Naive thymus-derived CD4-positive, alpha-beta T cell (primary cell): ENCODE measurements at regions of chr4 and their contacts with region 1.

Region 1: GRCh38 chr4:39469429-39470077 is 10.7 kb downstream of the LIAS start:
- DNase-seq: peak in 7 of 9 donors; percentile 36 to 60 (median 47)
- ATAC-seq: peak; percentile 98
- H3K4me3 ChIP-seq: no peak overlapping the region
- H3K4me3 Mint-ChIP-seq: no peak overlapping the region
- H3K27ac ChIP-seq: no peak overlapping the region
- H3K27ac Mint-ChIP-seq: peak overlapping the region in 6 of 9 donors; percentile 24 to 62 (median 44)
- H3K4me1 ChIP-seq: no peaks in the 10 kb centered on the region
- H3K4me1 Mint-ChIP-seq: peaks cover 0 to 15% (median 4%) of the 10 kb centered on the region in 7 donors
- H3K27me3 ChIP-seq: no peaks in the 10 kb centered on the region
- H3K27me3 Mint-ChIP-seq: no peaks in the 10 kb centered on the region

Region 2: GRCh38 chr4:39608451-39608850 is 138.9 kb after region 1 on chr4:
- CTCF ChIA-PET with region 1: no interaction called
- POLR2A ChIA-PET with region 1: no interaction called
- intact Hi-C with region 1: no loop called
- DNase-seq: no peak
- ATAC-seq: no peak
- H3K4me3 ChIP-seq: no peak overlapping the region
- H3K4me3 Mint-ChIP-seq: no peak overlapping the region
- H3K27ac ChIP-seq: no peak overlapping the region
- H3K27ac Mint-ChIP-seq: no peak overlapping the region
- H3K4me1 ChIP-seq: no peaks in the 10 kb centered on the region
- H3K4me1 Mint-ChIP-seq: peaks cover 0 to 3% (median 0%) of the 10 kb centered on the region in 7 donors
- H3K27me3 ChIP-seq: no peaks in the 10 kb centered on the region
- H3K27me3 Mint-ChIP-seq: no peaks in the 10 kb centered on the region

Region 3: DNA sequence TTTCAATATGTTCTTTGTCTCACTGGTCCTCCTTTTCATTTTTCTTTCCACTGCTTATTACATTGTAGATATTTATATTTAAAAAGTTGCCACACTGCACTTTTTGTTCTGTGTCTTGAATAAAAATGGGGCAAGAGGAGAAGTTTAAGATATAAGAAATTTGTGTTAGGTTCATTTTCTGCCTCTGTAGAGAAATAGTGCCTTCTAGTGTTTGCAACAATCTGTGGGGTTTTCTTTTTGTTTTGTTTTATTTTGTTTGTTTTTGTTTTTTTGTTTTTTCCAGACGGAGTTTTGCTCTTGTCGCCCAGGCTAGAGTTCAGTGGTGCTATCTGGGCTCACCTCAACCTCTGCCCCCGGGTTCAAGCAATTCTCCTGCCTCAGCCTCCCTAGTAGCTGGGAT is 189.2 kb after region 1 on chr4:
- CTCF ChIA-PET with region 1: interaction called, 8 read pairs
- POLR2A ChIA-PET with region 1: no interaction called
- intact Hi-C with region 1: loop called in 1 of 2 experiments (anchors 1 kb)
- DNase-seq: no peak
- ATAC-seq: no peak
- H3K4me3 ChIP-seq: no peak overlapping the region
- H3K4me3 Mint-ChIP-seq: no peak overlapping the region
- H3K27ac ChIP-seq: no peak overlapping the region
- H3K27ac Mint-ChIP-seq: no peak overlapping the region
- H3K4me1 ChIP-seq: no peaks in the 10 kb centered on the region
- H3K4me1 Mint-ChIP-seq: peaks cover 0 to 7% (median 0%) of the 10 kb centered on the region in 7 donors
- H3K27me3 ChIP-seq: no peaks in the 10 kb centered on the region
- H3K27me3 Mint-ChIP-seq: no peaks in the 10 kb centered on the region

Region 4: DNA sequence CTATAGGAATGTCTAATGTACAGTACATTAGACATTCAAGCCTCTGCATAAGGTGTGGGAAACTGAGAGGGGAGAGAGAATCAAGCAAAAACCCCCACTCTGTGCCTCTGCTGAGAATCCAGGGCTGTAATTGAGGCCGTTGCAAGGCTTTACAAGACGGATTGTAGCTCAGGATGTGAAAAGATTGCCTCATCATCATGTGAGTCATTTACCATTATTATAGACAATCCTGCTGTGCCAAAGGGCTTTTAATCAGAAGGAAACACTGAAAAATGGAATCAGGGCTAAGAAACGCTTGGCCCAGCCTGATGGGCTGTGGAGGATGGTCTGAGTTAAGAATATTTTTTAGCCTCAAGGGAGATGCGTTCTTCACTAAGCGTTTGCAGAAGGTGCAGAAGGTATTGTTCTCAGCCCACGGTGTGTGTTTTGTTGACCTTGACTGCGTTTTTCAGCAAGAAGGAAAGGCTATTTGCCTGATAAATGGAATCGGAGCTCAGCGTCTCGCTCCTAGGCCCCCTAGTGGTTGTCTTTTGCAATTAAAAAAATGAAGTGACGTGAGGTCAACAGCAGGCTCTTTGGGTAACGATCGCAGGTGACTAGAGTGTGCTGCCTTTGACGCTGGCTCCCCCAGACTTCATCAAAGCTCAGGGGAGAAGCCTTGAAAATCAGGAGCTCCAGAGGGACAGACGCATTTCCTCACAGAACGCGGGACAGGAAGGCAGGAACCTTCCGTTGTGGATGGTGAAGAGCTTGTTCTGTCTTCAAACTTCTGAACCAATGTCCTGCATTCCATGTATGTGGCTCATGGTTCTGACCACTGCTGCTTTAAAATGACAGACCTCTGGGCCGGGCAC is 847.5 kb after region 1 on chr4:
- CTCF ChIA-PET with region 1: no interaction called
- POLR2A ChIA-PET with region 1: no interaction called
- intact Hi-C with region 1: loop called in 1 of 2 experiments (anchors 5 kb)
- DNase-seq: peak; percentile 39 to 83 (median 76)
- ATAC-seq: peak; percentile 81
- H3K4me3 ChIP-seq: peak overlapping the region; percentile 75
- H3K4me3 Mint-ChIP-seq: peak overlapping the region; percentile 79 to 93 (median 86)
- H3K27ac ChIP-seq: peak overlapping the region; percentile 92
- H3K27ac Mint-ChIP-seq: peak overlapping the region; percentile 90 to 99 (median 99)
- H3K4me1 ChIP-seq: peaks cover 7 to 19% of the 10 kb centered on the region in 2 donors
- H3K4me1 Mint-ChIP-seq: peaks cover 23 to 71% (median 61%) of the 10 kb centered on the region in 7 donors
- H3K27me3 ChIP-seq: no peaks in the 10 kb centered on the region
- H3K27me3 Mint-ChIP-seq: no peaks in the 10 kb centered on the region

Region 5: DNA sequence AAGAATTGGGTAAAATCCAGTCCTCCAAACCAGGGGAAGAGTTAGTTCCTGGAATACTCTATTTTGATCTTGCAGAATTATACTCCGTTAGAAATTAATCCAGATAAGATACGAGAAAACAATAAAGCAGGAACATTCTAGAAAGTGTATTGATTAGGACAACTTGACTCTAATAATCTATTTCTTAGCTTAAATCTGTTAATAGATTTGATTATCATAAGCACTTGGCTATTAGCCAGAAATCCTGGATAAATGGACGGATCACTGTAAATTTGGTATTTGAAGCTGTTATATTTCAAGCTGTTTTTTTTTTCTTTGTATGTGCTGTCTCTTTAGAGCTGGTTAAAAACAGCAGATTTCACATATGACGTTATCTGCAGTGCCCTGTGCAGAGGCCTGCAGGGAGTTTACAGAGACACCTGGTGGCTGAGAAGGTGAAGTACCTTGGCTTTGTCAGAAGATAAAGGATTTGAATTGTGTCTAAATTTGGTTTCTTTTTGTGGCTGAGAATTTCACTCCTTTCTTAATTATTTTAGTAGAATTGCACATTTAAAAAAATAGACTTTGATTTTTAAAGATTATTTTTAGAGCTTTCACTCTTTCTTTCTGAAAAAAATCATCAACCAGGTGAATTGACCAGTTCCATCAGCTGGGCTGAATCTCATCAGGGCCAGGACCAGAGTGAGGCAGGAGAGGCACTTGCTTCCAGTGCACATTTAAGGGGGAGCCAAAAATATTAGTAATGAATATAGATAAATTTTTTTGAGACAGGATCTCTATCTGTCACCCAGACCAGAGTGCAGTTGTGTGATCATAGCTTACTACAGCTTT is 855.9 kb after region 1 on chr4:
- CTCF ChIA-PET with region 1: no interaction called
- POLR2A ChIA-PET with region 1: no interaction called
- intact Hi-C with region 1: loop called in 1 of 2 experiments (anchors 2 kb)
- DNase-seq: peak in 7 of 9 donors; percentile 70 to 85 (median 82)
- ATAC-seq: peak; percentile 100
- H3K4me3 ChIP-seq: no peak overlapping the region
- H3K4me3 Mint-ChIP-seq: peak overlapping the region in 4 of 10 donors; percentile 0 to 48 (median 14)
- H3K27ac ChIP-seq: peak overlapping the region; percentile 45
- H3K27ac Mint-ChIP-seq: peak overlapping the region in 8 of 9 donors; percentile 25 to 87 (median 64)
- H3K4me1 ChIP-seq: peaks cover 0 to 8% of the 10 kb centered on the region in 2 donors
- H3K4me1 Mint-ChIP-seq: peaks cover 13 to 40% (median 35%) of the 10 kb centered on the region in 7 donors
- H3K27me3 ChIP-seq: no peaks in the 10 kb centered on the region
- H3K27me3 Mint-ChIP-seq: peaks cover 0 to 7% (median 4%) of the 10 kb centered on the region in 5 donors

Region 6: DNA sequence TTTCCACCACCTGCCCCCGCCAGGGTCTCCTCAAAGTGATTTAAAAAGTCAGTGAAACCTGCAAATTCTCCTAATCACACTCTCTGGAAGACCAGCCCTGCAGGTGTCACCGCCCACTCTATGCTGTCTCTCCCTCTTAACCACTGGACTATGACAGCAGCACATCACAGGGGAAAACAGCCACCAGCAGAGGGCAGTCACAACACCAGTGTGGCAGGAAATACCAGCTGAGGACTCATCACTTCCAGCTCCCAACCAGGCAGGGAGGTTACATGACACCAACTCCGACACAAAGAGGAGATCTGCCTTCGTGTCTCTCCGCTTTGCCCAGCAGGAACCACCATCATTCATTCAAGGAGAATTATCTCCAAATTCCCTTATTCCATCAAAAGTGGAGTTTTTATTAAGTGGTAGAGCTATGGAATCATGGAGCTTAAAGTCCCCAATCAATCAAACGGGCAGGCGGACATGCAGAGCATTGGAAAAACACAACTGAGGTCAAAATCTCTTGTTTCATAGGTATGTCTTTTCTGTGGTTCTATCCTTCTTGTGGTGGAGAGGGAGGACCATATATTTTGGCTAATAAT is 1371.5 kb after region 1 on chr4:
- CTCF ChIA-PET with region 1: interaction called, 4 read pairs
- POLR2A ChIA-PET with region 1: no interaction called
- intact Hi-C with region 1: loop called (anchors 5 to 10 kb)
- DNase-seq: peak; percentile 8 to 75 (median 40)
- ATAC-seq: peak; percentile 87
- H3K4me3 ChIP-seq: no peak overlapping the region
- H3K4me3 Mint-ChIP-seq: no peak overlapping the region
- H3K27ac ChIP-seq: no peak overlapping the region
- H3K27ac Mint-ChIP-seq: no peak overlapping the region
- H3K4me1 ChIP-seq: no peaks in the 10 kb centered on the region
- H3K4me1 Mint-ChIP-seq: peaks cover 0 to 5% (median 0%) of the 10 kb centered on the region in 7 donors
- H3K27me3 ChIP-seq: no peaks in the 10 kb centered on the region
- H3K27me3 Mint-ChIP-seq: peaks cover 0 to 8% (median 0%) of the 10 kb centered on the region in 5 donors